IMR-90 (cell line): ENCODE measurements at regions of chr12 and their contacts with region 1.

Region 1: DNA sequence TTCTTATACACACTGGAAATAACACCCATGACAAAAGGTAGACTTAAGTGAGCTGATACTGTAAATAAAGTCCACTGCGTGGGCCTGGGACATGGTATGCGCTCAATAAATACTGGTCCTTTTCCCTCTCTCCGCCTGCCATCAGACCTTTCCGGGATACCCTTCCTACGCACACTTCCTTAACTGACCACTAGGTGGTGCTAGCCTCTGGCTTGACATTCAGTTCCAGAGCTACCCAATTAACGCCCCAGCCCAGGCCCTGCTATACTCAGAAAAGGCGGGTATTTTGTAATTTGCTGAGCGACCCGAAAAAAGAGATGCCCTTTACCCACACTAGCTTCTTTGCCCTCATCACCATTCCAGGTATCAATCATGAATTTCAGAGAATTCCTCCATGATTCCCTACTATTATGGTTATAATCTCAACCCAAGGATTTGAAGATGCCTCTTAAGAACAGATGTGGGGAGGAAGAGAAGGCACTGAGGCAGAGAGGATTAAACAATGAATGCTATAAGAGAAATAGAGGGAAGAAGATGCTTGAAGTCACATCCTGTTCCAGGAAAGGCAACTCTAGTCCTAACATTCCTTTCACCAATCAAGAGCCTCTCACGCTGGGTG is 3.9 kb upstream of the LRP1 start:
- DNase-seq: peak; percentile 69
- ATAC-seq: peak; percentile 36
- H3K4me3 ChIP-seq: no peak overlapping the region
- H3K27ac ChIP-seq: no peak overlapping the region
- H3K4me1 ChIP-seq: no peaks in the 10 kb centered on the region; the same call in none of the 2 replicates
- H3K27me3 ChIP-seq: no peaks in the 10 kb centered on the region
- CTCF ChIP-seq: peak; percentile 91
- POLR2A ChIP-seq: no peak
- RAD21 ChIP-seq: peak; percentile 90

Region 2: GRCh38 chr12:56677680-56678079 is 446.7 kb before region 1 on chr12:
- CTCF ChIA-PET with region 1: no interaction called
- POLR2A ChIA-PET with region 1: no interaction called
- dilution Hi-C with region 1: no loop called
- in situ Hi-C with region 1: no loop called
- intact Hi-C with region 1: no loop called
- DNase-seq: no peak
- ATAC-seq: no peak
- H3K4me3 ChIP-seq: no peak overlapping the region
- H3K27ac ChIP-seq: no peak overlapping the region
- H3K4me1 ChIP-seq: peaks cover 4% of the 10 kb centered on the region; the same call in 1 of the 2 replicates
- H3K27me3 ChIP-seq: no peaks in the 10 kb centered on the region
- CTCF ChIP-seq: no peak
- POLR2A ChIP-seq: no peak
- RAD21 ChIP-seq: no peak

Region 3: DNA sequence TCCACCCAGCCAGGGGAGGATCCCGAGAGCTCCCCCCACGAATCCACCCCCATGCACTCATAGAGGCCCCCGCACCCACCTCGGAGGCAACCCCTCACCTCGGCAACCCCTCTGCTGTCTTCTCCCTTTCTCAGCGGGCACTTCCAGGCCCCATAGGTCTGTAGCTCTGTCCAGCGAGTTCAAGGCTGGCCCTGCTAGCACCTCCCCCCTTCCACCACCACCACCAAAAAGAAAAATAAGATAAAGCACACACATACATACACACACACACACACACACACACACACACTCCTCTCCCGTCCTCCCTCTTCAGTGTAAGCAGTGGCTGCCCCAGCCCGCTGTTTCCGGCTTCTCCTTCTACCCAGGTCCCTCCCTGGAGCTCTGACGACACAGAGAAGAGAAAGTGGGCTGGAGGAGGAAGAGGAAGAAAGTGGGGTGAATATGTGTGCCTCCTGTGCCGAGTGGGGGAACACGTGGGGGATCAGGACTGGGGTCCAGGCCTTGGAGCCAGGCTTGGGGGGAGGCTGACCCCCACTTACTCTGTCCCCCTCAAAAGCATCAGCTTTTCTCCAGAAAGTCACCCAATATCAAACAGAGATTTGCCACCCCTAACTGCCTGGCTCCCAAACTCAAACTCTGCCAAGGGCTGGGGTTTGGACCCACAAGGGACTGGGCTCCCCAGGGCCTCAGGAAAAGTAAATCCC is 13.2 kb before region 1 on chr12 and contains the start of gene STAT6:
- CTCF ChIA-PET with region 1: interaction called, 13 read pairs
- POLR2A ChIA-PET with region 1: interaction called, 12 read pairs
- dilution Hi-C with region 1: no loop called
- in situ Hi-C with region 1: no loop called
- intact Hi-C with region 1: no loop called
- DNase-seq: peak; percentile 87
- ATAC-seq: peak; percentile 68
- H3K4me3 ChIP-seq: peak within 1 kb of the TSS; percentile 64
- H3K27ac ChIP-seq: peak within 1 kb of the TSS; percentile 94
- H3K4me1 ChIP-seq: 0 out of 2 replicates have a peak, but pooled peaks cover 2% of the 10 kb centered on the region
- H3K27me3 ChIP-seq: no peaks in the 10 kb centered on the region
- CTCF ChIP-seq: no peak
- POLR2A ChIP-seq: peak; percentile 72
- RAD21 ChIP-seq: no peak
- total RNA-seq, gene STAT6: 38.9 and 43.4 TPM in 2 replicates

Region 4: GRCh38 chr12:57148469-57149244 is 24.3 kb after region 1 on chr12:
- CTCF ChIA-PET with region 1: interaction called, 5 read pairs
- POLR2A ChIA-PET with region 1: no interaction called
- dilution Hi-C with region 1: no loop called
- in situ Hi-C with region 1: no loop called
- intact Hi-C with region 1: loop called (anchors 2 kb)
- DNase-seq: peak; percentile 77
- ATAC-seq: peak; percentile 44
- H3K4me3 ChIP-seq: no peak overlapping the region
- H3K27ac ChIP-seq: peak overlapping the region; percentile 94
- H3K4me1 ChIP-seq: peaks cover 70% of the 10 kb centered on the region
- H3K27me3 ChIP-seq: no peaks in the 10 kb centered on the region
- CTCF ChIP-seq: no peak
- POLR2A ChIP-seq: no peak
- RAD21 ChIP-seq: no peak

Region 5: DNA sequence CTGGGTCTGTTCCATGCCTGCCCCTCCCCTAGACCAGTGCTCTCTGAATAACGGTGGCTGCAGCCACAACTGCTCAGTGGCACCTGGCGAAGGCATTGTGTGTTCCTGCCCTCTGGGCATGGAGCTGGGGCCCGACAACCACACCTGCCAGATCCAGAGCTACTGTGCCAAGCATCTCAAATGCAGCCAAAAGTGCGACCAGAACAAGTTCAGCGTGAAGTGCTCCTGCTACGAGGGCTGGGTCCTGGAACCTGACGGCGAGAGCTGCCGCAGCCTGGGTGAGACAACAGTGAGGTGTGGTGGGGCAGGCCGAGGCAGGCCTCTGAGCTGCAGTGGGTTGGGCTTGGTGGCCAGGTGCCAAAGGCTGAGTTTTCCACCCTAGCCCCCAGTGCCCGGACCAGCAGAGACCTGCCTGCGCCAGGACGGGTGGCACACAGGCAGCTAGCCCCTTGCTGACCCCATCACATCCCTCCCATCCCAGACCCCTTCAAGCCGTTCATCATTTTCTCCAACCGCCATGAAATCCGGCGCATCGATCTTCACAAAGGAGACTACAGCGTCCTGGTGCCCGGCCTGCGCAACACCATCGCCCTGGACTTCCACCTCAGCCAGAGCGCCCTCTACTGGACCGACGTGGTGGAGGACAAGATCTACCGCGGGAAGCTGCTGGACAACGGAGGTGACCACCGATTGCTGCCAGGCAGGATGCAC is 51.2 kb after region 1 on chr12:
- CTCF ChIA-PET with region 1: interaction called, 12 read pairs
- POLR2A ChIA-PET with region 1: interaction called, 3 read pairs
- dilution Hi-C with region 1: no loop called
- in situ Hi-C with region 1: loop called (anchors 5 kb)
- intact Hi-C with region 1: loop called (anchors 2 kb)
- DNase-seq: peak; percentile 71
- ATAC-seq: peak; percentile 55
- H3K4me3 ChIP-seq: no peak overlapping the region
- H3K27ac ChIP-seq: no peak overlapping the region
- H3K4me1 ChIP-seq: peaks cover 8% of the 10 kb centered on the region
- H3K27me3 ChIP-seq: no peaks in the 10 kb centered on the region
- CTCF ChIP-seq: peak; percentile 66
- POLR2A ChIP-seq: no peak
- RAD21 ChIP-seq: peak; percentile 71

Region 6: GRCh38 chr12:57182921-57183790 is 58.8 kb after region 1 on chr12:
- CTCF ChIA-PET with region 1: interaction called, 3 read pairs
- POLR2A ChIA-PET with region 1: no interaction called
- dilution Hi-C with region 1: no loop called
- in situ Hi-C with region 1: loop called (anchors 5 kb)
- intact Hi-C with region 1: loop called (anchors 2 kb)
- DNase-seq: peak; percentile 59
- ATAC-seq: peak; percentile 89
- H3K4me3 ChIP-seq: no peak overlapping the region
- H3K27ac ChIP-seq: no peak overlapping the region
- H3K4me1 ChIP-seq: no peaks in the 10 kb centered on the region
- H3K27me3 ChIP-seq: no peaks in the 10 kb centered on the region
- CTCF ChIP-seq: peak; percentile 78
- POLR2A ChIP-seq: no peak
- RAD21 ChIP-seq: peak; percentile 81

Region 7: DNA sequence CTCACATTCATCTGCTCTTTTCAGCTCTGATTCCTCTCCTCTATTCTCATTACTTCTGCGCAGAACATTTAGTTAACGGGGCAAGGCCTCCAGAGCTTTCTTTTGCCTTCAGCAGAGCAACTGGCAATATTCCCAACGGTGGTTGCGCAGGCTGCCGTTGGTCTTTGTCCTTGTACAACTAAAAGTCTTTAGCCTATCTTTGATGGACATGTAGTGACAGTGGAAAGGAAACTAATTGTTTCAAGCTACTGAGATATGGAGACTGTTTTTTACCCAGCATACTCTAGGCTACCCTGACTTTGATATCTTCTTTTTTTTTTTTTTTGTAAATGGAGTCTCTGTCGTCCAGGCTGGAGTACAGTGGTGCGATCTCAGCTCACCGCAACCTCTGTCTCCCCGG is 293.9 kb after region 1 on chr12:
- CTCF ChIA-PET with region 1: no interaction called
- POLR2A ChIA-PET with region 1: no interaction called
- dilution Hi-C with region 1: no loop called
- in situ Hi-C with region 1: no loop called
- intact Hi-C with region 1: no loop called
- DNase-seq: no peak
- ATAC-seq: no peak
- H3K4me3 ChIP-seq: no peak overlapping the region
- H3K27ac ChIP-seq: no peak overlapping the region
- H3K4me1 ChIP-seq: 0 out of 2 replicates have a peak, but pooled peaks cover 2% of the 10 kb centered on the region
- H3K27me3 ChIP-seq: no peaks in the 10 kb centered on the region
- CTCF ChIP-seq: no peak
- POLR2A ChIP-seq: no peak
- RAD21 ChIP-seq: no peak